ENCODE measurements at regions of chr3 and their contacts with region 1.

Region 1: GRCh38 chr3:18424729-18425640 is at the start of gene SATB1:
- DNase-seq: peak; percentile 67 to 81 (median 68)
- H3K4me3 ChIP-seq: peak within 1 kb of the TSS; percentile 66 to 77
- H3K4me3 Mint-ChIP-seq: peak within 1 kb of the TSS; percentile 91 to 98 (median 97)
- H3K27ac ChIP-seq: peak within 1 kb of the TSS; percentile 79
- H3K27ac Mint-ChIP-seq: peak within 1 kb of the TSS; percentile 95 to 98 (median 97)
- H3K4me1 ChIP-seq: peaks cover 72% of the 10 kb centered on the region
- H3K4me1 Mint-ChIP-seq: peaks cover 48 to 88% (median 65%) of the 10 kb centered on the region in 4 donors
- H3K27me3 ChIP-seq: no peaks in the 10 kb centered on the region
- H3K27me3 Mint-ChIP-seq: peaks cover 0 to 1% of the 10 kb centered on the region in 2 donors
- total RNA-seq, gene SATB1: 211 TPM

Region 2: DNA sequence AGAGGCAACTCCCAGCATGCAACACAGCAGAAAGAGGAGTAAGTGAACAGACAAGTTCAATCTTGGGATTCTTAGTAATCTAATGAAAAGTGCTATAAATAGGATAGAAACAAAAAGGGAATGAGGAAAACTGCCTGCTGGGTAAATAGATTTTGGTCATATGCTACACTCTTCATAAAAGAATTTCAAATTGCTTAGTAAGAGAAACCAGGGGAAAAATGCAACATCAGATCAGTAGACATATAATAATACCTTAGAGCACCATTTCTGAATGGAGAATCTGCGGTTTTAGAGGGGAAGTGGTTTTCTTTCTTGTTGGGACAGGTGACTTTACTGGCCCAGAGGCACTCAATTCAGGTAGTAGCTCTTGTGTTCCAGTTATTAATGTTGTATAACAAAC is 669.1 kb before region 1 on chr3:
- CTCF ChIA-PET with region 1: no interaction called
- POLR2A ChIA-PET with region 1: no interaction called
- intact Hi-C with region 1: no loop called
- DNase-seq: peak in 4 of 5 donors; percentile 25 to 35 (median 32)
- H3K4me3 ChIP-seq: no peak overlapping the region
- H3K4me3 Mint-ChIP-seq: no peak overlapping the region
- H3K27ac ChIP-seq: no peak overlapping the region
- H3K27ac Mint-ChIP-seq: no peak overlapping the region
- H3K4me1 ChIP-seq: peaks cover 10% of the 10 kb centered on the region
- H3K4me1 Mint-ChIP-seq: peaks cover 7 to 12% (median 8%) of the 10 kb centered on the region in 4 donors
- H3K27me3 ChIP-seq: no peaks in the 10 kb centered on the region
- H3K27me3 Mint-ChIP-seq: no peaks in the 10 kb centered on the region

Region 3: GRCh38 chr3:17995769-17996168 is 429.2 kb before region 1 on chr3:
- CTCF ChIA-PET with region 1: no interaction called
- POLR2A ChIA-PET with region 1: no interaction called
- intact Hi-C with region 1: no loop called
- DNase-seq: no peak
- H3K4me3 ChIP-seq: no peak overlapping the region
- H3K4me3 Mint-ChIP-seq: no peak overlapping the region
- H3K27ac ChIP-seq: no peak overlapping the region
- H3K27ac Mint-ChIP-seq: no peak overlapping the region
- H3K4me1 ChIP-seq: no peaks in the 10 kb centered on the region
- H3K4me1 Mint-ChIP-seq: no peaks in the 10 kb centered on the region
- H3K27me3 ChIP-seq: no peaks in the 10 kb centered on the region
- H3K27me3 Mint-ChIP-seq: peaks cover 0 to 4% of the 10 kb centered on the region in 2 donors

Region 4: GRCh38 chr3:18282507-18282906 is 142.5 kb before region 1 on chr3:
- CTCF ChIA-PET with region 1: no interaction called
- POLR2A ChIA-PET with region 1: no interaction called
- intact Hi-C with region 1: no loop called
- DNase-seq: no peak
- H3K4me3 ChIP-seq: no peak overlapping the region
- H3K4me3 Mint-ChIP-seq: no peak overlapping the region
- H3K27ac ChIP-seq: no peak overlapping the region
- H3K27ac Mint-ChIP-seq: no peak overlapping the region
- H3K4me1 ChIP-seq: no peaks in the 10 kb centered on the region
- H3K4me1 Mint-ChIP-seq: no peaks in the 10 kb centered on the region
- H3K27me3 ChIP-seq: no peaks in the 10 kb centered on the region
- H3K27me3 Mint-ChIP-seq: peaks cover 0 to 4% of the 10 kb centered on the region in 2 donors

Region 5: GRCh38 chr3:18344306-18345014 is 80.5 kb before region 1 on chr3:
- CTCF ChIA-PET with region 1: no interaction called
- POLR2A ChIA-PET with region 1: no interaction called
- intact Hi-C with region 1: no loop called
- DNase-seq: no peak
- H3K4me3 ChIP-seq: no peak overlapping the region
- H3K4me3 Mint-ChIP-seq: no peak overlapping the region
- H3K27ac ChIP-seq: no peak overlapping the region
- H3K27ac Mint-ChIP-seq: no peak overlapping the region
- H3K4me1 ChIP-seq: no peaks in the 10 kb centered on the region
- H3K4me1 Mint-ChIP-seq: peaks cover 0 to 10% (median 8%) of the 10 kb centered on the region in 4 donors
- H3K27me3 ChIP-seq: no peaks in the 10 kb centered on the region
- H3K27me3 Mint-ChIP-seq: no peaks in the 10 kb centered on the region

Region 6: GRCh38 chr3:18389108-18389733 is 35.8 kb before region 1 on chr3:
- CTCF ChIA-PET with region 1: interaction called, 6 read pairs
- POLR2A ChIA-PET with region 1: interaction called, 3 read pairs
- intact Hi-C with region 1: loop called (anchors 1 kb)
- DNase-seq: peak in 4 of 5 donors; percentile 29 to 45 (median 36)
- H3K4me3 ChIP-seq: no peak overlapping the region
- H3K4me3 Mint-ChIP-seq: peak overlapping the region in 1 of 8 donors; percentile 43
- H3K27ac ChIP-seq: no peak overlapping the region
- H3K27ac Mint-ChIP-seq: peak overlapping the region in 2 of 7 donors; percentile 22 to 69
- H3K4me1 ChIP-seq: peaks cover 29% of the 10 kb centered on the region
- H3K4me1 Mint-ChIP-seq: peaks cover 15 to 53% (median 27%) of the 10 kb centered on the region in 4 donors
- H3K27me3 ChIP-seq: no peaks in the 10 kb centered on the region
- H3K27me3 Mint-ChIP-seq: no peaks in the 10 kb centered on the region

Region 7: DNA sequence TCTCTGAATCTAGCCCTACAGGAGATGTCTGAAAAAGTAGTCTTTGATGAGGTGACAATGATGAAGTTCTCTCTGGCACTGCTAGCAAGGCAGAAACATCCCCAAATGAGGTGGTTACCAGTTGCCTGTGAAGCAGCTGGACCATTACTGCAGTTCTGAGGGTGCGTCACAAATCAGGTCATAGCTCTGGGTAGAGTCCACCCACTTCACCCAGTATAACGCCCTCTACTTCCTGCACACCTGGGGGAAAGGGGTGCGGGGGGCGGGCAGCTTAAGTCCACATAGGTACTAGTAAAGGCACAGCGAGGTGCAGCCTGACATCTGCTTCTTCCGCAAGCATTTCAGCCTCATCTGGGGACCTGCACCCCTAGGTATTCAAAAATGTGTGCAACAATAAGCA is 13.6 kb after region 1 on chr3:
- CTCF ChIA-PET with region 1: interaction called, 5 read pairs
- POLR2A ChIA-PET with region 1: interaction called, 88 read pairs
- intact Hi-C with region 1: loop called (anchors 1 kb)
- DNase-seq: peak; percentile 66 to 87 (median 75)
- H3K4me3 ChIP-seq: peak overlapping the region in 1 of 2 donors; percentile 39
- H3K4me3 Mint-ChIP-seq: peak overlapping the region; percentile 67 to 87 (median 84)
- H3K27ac ChIP-seq: peak overlapping the region; percentile 73
- H3K27ac Mint-ChIP-seq: peak overlapping the region; percentile 77 to 95 (median 94)
- H3K4me1 ChIP-seq: peaks cover 89% of the 10 kb centered on the region
- H3K4me1 Mint-ChIP-seq: peaks cover 35 to 78% (median 52%) of the 10 kb centered on the region in 4 donors
- H3K27me3 ChIP-seq: no peaks in the 10 kb centered on the region
- H3K27me3 Mint-ChIP-seq: no peaks in the 10 kb centered on the region

Region 8: GRCh38 chr3:18988614-18989229 is 563.7 kb after region 1 on chr3:
- CTCF ChIA-PET with region 1: no interaction called
- POLR2A ChIA-PET with region 1: no interaction called
- intact Hi-C with region 1: loop called (anchors 10 kb)
- DNase-seq: peak in 4 of 5 donors; percentile 22 to 33 (median 32)
- H3K4me3 ChIP-seq: no peak overlapping the region
- H3K4me3 Mint-ChIP-seq: peak overlapping the region in 4 of 8 donors; percentile 2 to 52 (median 19)
- H3K27ac ChIP-seq: no peak overlapping the region
- H3K27ac Mint-ChIP-seq: no peak overlapping the region
- H3K4me1 ChIP-seq: no peaks in the 10 kb centered on the region
- H3K4me1 Mint-ChIP-seq: peaks cover 2 to 15% (median 12%) of the 10 kb centered on the region in 4 donors
- H3K27me3 ChIP-seq: peaks cover 6% of the 10 kb centered on the region
- H3K27me3 Mint-ChIP-seq: peaks cover 18 to 27% of the 10 kb centered on the region in 2 donors